Heart right ventricle (tissue), 16 donors: ENCODE measurements at regions of chr5 and their contacts with region 1.

Region 1: DNA sequence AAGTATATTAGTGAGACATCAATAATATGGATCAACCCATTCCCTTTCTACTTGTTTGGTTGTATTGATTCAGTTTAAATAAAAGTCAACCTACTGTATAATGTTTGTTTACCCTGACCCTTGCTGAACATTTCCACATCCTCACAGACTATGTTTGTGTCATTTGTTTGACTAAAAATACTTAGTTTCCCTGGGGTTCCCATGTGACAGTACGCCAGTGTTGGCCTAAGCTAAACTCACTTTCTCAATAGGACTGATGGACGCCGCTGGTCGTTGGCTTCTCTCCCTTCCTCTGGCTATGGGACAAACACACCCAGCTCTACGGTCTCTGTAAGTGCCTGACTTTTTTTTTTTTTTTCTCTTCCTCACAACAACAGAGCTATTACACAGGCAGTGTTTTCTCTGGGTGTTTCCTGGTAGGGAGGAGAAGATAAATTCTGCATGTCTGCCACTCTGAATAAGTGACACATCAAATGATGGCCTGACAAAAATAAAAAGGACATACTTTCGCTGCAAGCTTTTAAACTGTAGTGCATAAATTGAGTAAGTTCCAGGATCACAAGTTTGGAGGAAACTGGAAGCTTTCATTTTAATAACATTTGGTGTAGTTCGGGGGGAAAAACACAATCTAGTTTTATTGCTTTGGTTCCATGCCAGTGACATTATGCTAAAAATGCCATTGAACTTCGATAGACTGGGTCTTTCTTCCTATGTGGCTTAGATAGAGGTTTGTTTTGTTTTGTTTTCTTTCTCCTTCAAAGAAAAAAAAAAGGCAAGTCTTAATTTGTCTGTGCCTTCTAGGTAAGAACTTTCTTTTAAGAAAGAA is 101.0 kb downstream of the CD180 start:
- DNase-seq: peak; percentile 68 to 87
- ATAC-seq: peak; percentile 96 to 98 (median 96)
- H3K4me3 ChIP-seq: peak overlapping the region in 6 of 10 donors; percentile 6 to 36 (median 24)
- H3K27ac ChIP-seq: peak overlapping the region; percentile 51 to 83 (median 76)
- H3K4me1 ChIP-seq: peaks cover 12 to 71% (median 49%) of the 10 kb centered on the region in 9 donors
- H3K27me3 ChIP-seq: no peaks in the 10 kb centered on the region
- CTCF ChIP-seq: no peak

Region 2: DNA sequence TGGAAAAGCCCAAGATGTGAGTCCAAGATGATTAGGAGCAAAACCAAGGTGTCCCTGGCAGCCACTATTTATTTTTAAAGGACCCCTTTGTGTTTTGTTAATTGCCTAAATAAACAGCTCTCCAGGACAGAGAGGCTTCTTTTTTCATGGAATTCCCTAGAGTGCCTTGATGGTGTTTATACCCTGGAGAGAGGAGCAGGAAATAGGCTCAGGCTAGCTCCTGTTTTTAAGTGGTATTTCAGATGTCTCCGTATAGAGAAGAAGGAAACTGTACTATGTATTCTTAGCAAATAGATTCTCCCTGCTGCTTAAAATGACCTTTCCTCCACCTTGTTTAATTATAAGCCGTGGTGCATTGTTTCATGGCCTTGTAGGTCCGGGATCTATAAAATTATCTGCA is 191.4 kb before region 1 on chr5:
- intact Hi-C with region 1: loop called in 1 of 10 experiments (anchors 5 kb)
- DNase-seq: no peak
- ATAC-seq: peak in 5 of 8 donors; percentile 52 to 76 (median 72)
- H3K4me3 ChIP-seq: no peak overlapping the region
- H3K27ac ChIP-seq: peak overlapping the region in 1 of 10 donors; percentile 48
- H3K4me1 ChIP-seq: peaks cover 0 to 42% (median 11%) of the 10 kb centered on the region in 9 donors
- H3K27me3 ChIP-seq: no peaks in the 10 kb centered on the region
- CTCF ChIP-seq: no peak

Region 3: DNA sequence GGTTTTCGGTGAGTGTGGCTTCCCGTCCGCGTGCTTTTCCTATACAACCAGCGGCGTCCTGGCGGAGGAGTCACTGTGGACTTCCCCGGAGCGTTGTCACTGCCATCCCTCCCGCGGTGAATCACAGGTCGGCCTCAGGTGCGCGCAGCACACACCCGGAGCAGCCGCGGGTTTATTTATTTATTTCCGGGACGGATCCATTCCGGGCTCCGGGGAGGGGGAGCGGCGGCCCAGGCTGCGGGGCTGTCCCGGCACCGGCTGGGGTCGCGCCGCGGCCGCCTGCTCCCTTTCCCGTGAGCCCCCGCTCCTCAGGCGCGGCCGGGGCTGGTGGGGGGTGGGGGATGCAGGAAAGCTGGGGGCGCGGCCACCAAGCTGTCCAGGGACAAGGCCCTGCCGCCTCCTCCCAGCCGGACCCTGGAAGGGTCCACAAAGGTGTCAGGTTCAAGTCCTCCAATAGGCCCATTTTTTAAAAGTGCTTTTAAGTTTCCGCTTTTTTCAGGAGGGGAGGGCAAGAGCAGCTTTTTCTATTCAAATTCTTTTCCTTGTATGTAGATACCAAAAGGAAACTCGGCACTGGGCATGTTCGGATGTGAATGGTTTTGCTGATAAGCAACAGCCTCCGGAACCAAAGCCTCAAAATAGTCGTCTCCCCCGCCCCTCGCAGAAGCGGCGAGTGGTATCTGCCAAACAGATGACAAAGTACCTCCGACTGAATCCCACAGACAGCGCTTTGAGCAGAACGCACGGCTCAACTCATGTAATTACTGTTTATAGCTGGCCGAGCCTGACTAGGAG is 91.4 kb before region 1 on chr5:
- intact Hi-C with region 1: loop called in 5 of 10 experiments (anchors 1 to 10 kb)
- DNase-seq: peak; percentile 80 to 94
- ATAC-seq: peak; percentile 89 to 95 (median 92)
- H3K4me3 ChIP-seq: peak overlapping the region; percentile 38 to 70 (median 60)
- H3K27ac ChIP-seq: peak overlapping the region; percentile 79 to 94 (median 88)
- H3K4me1 ChIP-seq: peaks cover 5 to 64% (median 55%) of the 10 kb centered on the region in 9 donors
- H3K27me3 ChIP-seq: peaks cover 0 to 5% (median 0%) of the 10 kb centered on the region in 7 donors
- CTCF ChIP-seq: no peak

Region 4: DNA sequence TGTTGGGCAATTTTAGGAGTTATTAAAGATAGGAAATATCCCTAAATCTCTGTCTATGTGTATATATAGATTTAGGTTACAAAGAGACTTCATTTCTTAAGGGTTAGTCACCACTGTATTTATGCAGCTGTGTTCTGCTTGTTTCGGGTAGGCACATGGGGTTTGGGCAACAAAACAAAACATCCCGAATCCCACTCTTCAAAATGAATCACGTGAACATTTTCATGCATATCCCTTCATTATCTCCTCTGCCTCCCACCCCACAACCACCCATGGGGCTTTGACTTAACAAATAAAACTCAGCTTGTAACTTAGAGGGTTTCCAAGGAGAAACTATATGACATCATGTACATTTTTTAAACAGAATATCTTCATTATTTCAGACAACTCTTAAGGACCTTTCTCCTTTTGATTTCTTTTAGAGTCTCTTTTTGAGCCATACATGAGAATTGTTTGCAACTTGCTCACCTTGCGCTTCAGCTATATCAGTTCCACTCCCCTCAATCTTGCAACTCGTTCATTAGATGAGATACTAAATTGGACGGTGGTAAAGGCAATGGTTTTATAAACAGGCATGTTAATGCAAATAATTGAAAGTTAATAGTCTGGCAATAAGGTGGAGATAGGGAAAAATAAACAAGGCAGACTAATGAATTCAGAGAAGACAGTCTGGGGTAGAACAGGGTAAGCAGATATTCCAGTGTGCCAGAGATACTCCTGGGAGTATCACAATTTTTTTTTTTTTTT is 35.6 kb before region 1 on chr5:
- intact Hi-C with region 1: loop called in 1 of 10 experiments (anchors 5 kb)
- DNase-seq: no peak
- ATAC-seq: no peak
- H3K4me3 ChIP-seq: no peak overlapping the region
- H3K27ac ChIP-seq: peak overlapping the region in 3 of 10 donors; percentile 39 to 48 (median 45)
- H3K4me1 ChIP-seq: peaks cover 0 to 80% (median 43%) of the 10 kb centered on the region in 9 donors
- H3K27me3 ChIP-seq: no peaks in the 10 kb centered on the region
- CTCF ChIP-seq: no peak

Region 5: DNA sequence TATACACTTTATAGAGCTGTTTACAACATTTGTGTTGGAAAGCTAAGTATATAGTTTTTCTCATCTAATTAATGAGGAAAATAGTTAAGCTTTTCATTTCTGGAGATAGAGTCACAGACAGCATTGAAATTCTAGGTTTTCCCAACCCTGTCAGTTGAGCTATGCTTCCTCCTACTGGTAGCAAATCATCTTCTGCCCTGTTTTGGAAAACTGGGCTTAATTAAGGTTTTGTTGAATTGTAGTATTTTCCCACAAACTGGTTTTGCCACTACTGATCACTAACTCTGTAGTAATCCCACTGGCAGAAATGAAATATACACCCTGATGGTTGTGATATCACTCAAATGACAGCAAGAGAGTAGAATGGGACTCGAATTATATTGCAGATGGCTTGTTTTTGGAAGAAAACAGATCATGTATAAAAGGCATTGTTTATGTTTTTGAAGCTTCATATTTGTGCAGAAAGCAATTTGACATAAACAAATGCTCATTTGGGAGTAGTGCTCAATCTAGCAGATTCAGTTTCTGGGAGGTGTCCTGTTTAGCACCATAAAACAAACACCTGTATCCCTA is 54.5 kb after region 1 on chr5:
- intact Hi-C with region 1: loop called in 1 of 10 experiments (anchors 5 kb)
- DNase-seq: no peak
- ATAC-seq: peak in 1 of 8 donors; percentile 71
- H3K4me3 ChIP-seq: peak overlapping the region in 7 of 10 donors; percentile 10 to 38 (median 26)
- H3K27ac ChIP-seq: peak overlapping the region in 1 of 10 donors; percentile 21
- H3K4me1 ChIP-seq: peaks cover 0 to 11% (median 6%) of the 10 kb centered on the region in 9 donors
- H3K27me3 ChIP-seq: no peaks in the 10 kb centered on the region
- CTCF ChIP-seq: peak in 8 of 9 donors; percentile 17 to 60 (median 49)